Activated CD4-positive, alpha-beta T cell treated with anti-CD3 and anti-CD28 coated beads for 36 hours (primary cell): ENCODE measurements at regions of chr18 and their contacts with region 1.

Region 1: DNA sequence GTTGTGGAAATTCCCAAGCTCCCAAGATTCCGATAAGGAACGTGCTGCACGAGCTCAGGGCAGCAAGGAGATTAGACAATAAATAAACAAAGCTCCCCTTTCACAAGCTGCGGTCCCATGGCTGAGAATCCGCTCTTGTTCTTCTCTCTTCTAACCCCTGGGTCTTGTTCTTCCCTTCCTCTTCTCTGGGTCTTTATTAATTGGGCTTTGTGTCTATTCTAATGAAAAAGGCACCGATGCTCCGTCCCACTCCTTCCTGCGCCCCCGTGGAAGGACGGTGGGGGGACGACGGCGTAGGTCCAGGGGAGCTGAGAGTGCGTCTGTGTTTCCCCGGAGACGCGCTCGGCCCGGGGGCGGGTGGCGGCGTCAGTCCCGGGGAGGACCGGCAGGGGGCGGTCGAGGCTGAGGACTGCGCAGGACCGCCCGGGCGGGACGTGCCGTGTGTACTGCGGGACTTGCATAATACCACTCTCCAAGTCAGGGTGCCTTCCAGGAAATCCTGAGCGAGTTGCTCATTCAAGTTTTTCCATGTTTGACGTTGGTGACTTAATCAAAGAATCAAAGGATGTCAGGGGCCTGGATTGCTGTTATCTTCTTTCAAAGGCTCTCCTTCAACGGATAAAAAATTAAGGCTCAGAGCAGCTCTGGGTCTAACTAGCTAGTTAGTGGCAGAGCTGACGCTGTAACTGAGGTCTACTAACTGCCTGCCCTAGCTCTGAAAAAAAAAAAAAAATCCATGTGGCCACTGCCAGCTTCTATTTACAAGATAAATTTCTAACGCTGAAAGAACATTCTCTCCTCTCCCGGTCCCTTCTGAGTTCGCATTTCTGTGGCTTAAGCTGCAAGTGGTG is 321.4 kb downstream of the TGIF1 start:
- DNase-seq: peak; percentile 92
- ATAC-seq: peak; percentile 99
- H3K4me3 Mint-ChIP-seq: peak overlapping the region; percentile 31
- H3K27ac Mint-ChIP-seq: peak overlapping the region; percentile 28
- H3K4me1 Mint-ChIP-seq: peaks cover 4% of the 10 kb centered on the region
- H3K27me3 Mint-ChIP-seq: peaks cover 16% of the 10 kb centered on the region

Region 2: GRCh38 chr18:3281456-3282400 is 489.6 kb before region 1 on chr18:
- CTCF ChIA-PET with region 1: interaction called, 5 read pairs
- POLR2A ChIA-PET with region 1: no interaction called
- intact Hi-C with region 1: loop called in 1 of 2 experiments (anchors 5 kb)
- DNase-seq: no peak
- ATAC-seq: peak; percentile 90
- H3K4me3 Mint-ChIP-seq: no peak overlapping the region
- H3K27ac Mint-ChIP-seq: no peak overlapping the region
- H3K4me1 Mint-ChIP-seq: peaks cover 10% of the 10 kb centered on the region
- H3K27me3 Mint-ChIP-seq: no peaks in the 10 kb centered on the region

Region 3: DNA sequence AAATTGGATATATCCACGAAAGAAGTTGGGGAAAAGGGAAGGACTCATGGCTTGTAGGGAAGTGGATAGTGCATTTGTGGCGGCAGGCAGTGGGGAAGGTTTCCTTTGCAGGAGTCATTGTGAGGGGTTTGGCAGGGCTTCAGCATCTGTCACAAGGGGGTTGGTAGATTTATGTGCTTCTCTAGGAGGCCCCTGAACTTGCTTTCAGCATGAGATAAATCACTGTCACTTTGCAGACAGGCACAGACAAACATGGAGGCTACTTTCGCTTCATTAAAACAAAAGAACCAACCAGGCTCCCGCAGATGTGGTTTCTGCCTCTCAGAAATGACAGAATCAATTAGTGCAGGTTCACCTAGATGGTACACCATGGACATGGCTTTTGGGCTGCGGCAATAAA is 19.4 kb after region 1 on chr18:
- CTCF ChIA-PET with region 1: interaction called, 19 read pairs
- POLR2A ChIA-PET with region 1: no interaction called
- intact Hi-C with region 1: no loop called
- DNase-seq: no peak
- ATAC-seq: no peak
- H3K4me3 Mint-ChIP-seq: no peak overlapping the region
- H3K27ac Mint-ChIP-seq: no peak overlapping the region
- H3K4me1 Mint-ChIP-seq: no peaks in the 10 kb centered on the region
- H3K27me3 Mint-ChIP-seq: peaks cover 5% of the 10 kb centered on the region

Region 4: GRCh38 chr18:3869848-3870247 is 98.5 kb after region 1 on chr18:
- CTCF ChIA-PET with region 1: interaction called, 44 read pairs
- POLR2A ChIA-PET with region 1: no interaction called
- intact Hi-C with region 1: loop called (anchors 1 to 2 kb)
- DNase-seq: no peak
- ATAC-seq: no peak
- H3K4me3 Mint-ChIP-seq: no peak overlapping the region
- H3K27ac Mint-ChIP-seq: no peak overlapping the region
- H3K4me1 Mint-ChIP-seq: no peaks in the 10 kb centered on the region
- H3K27me3 Mint-ChIP-seq: peaks cover 11% of the 10 kb centered on the region

Region 5: DNA sequence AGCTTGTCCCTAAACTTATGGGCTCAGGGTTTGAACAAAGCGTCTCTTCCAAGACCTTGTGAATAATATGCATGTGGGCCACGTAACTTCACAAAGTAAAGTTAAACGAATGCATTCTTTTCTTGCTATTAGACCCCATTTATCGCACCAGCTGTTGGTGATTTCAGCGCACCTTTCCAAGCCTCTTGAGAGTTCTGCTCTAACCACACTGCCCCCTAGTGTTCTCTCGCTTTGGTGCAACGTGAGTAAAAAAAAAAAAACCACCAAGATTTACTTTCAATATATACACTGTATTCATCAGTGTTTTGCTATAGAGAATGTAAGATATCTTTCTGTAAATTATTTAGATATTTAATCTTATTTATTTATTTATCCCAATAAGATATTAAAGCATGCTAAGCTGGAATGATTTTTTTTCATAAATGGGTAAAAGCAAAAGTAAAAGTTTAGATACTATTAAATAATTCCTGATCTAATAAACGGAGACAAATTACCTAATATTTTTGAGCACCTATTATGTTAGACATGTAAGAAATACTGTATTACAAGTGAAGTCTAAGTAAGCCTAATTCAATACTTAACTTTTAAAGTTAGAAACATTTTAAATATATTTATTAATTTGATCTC is 224.2 kb after region 1 on chr18:
- CTCF ChIA-PET with region 1: interaction called, 55 read pairs
- POLR2A ChIA-PET with region 1: no interaction called
- intact Hi-C with region 1: loop called (anchors 1 kb)
- DNase-seq: peak; percentile 77
- ATAC-seq: peak; percentile 78
- H3K4me3 Mint-ChIP-seq: no peak overlapping the region
- H3K27ac Mint-ChIP-seq: no peak overlapping the region
- H3K4me1 Mint-ChIP-seq: no peaks in the 10 kb centered on the region
- H3K27me3 Mint-ChIP-seq: peaks cover 4% of the 10 kb centered on the region

Region 6: DNA sequence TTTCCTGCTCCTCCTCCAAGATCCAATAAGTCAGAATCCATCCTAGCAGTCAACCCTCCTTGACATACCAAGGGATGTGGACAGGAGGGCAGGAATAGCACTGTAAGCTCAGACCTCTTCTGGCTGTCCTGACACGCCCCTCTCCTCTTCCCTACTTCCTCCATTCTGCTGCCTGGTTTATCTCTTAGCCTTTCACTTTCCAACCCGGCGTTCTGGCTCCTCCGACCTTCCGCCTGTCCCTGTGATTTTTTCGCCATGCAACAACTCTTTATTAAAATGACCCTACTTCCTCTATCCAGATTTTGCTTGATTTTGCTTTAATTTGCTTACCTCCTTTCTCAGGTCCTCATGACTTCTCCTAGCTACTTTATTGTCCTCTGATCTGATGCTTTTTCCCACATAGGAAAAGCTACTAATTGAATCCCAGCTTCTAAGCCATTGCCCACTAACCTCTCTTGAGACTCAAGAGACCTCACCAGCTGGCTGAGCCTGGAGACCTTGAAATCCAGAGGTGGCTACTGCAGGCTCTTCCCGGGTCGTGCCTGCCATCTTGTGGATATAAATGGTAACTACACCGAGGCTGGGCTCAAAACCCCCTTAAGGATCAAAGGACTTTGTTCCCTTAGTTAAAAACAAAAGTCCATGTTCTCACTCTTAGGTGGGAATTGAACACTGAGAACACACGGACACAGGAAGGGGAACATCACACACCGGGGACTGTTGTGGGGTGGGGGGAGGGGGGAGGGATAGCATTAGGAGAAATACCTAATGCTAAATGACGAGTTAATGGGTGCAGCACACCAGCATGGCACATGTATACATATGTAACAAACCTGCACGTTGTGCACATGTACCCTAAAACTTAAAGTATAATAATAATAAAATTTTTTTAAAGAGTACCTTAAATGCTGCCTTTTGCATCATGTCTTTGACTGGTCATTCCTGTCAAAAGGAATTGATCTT is 1286.3 kb after region 1 on chr18:
- CTCF ChIA-PET with region 1: no interaction called
- POLR2A ChIA-PET with region 1: no interaction called
- intact Hi-C with region 1: loop called (anchors 5 to 10 kb)
- DNase-seq: peak; percentile 74
- ATAC-seq: peak; percentile 74
- H3K4me3 Mint-ChIP-seq: no peak overlapping the region
- H3K27ac Mint-ChIP-seq: no peak overlapping the region
- H3K4me1 Mint-ChIP-seq: peaks cover 18% of the 10 kb centered on the region
- H3K27me3 Mint-ChIP-seq: peaks cover 2% of the 10 kb centered on the region